Activated T-helper 2 cell treated with anti-CD3 and anti-CD28 coated beads, Interferon-gamma antibody, Interleukin-2, Interleukin-4, amounts not matched to agents 10 μg/mL and 5 μg/mL and 100 μg/mL, durations not matched to agents 14 hours and 24 hours and 36 hours (primary cell): ENCODE measurements at regions of chr17 and their contacts with region 1.

Region 1: DNA sequence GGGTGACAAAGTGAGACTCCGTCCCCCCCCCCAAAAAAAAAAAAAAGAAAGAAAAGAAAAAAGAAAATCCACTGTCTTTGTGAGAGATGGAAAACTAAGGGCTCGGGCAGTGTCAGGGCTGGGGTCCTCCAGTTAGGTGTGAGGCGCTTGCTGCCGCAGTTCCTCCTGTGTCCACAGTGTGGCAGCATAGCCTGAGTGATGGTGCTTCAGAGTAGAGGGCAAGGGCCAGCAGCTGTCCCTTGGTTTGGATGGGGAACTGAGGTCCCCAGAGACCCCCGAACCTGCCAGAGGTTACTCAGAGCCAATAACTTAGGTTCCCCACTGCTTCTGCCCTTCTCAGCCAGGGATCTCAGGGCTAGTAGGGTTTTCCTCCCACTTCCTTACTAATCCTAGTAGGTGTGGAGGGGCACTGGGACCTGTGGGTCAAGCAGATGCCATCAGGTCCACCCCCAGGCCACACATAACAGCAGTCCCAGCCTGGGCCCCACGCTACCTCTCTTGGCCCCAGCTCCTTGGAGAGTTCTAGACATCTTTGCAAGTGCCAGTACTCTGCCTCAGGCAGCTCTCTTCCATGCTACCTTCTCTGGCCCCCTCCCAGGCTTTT is 7.9 kb upstream of the LLGL1 start:
- DNase-seq: peak; percentile 65
- H3K4me3 Mint-ChIP-seq: no peak overlapping the region
- H3K27ac Mint-ChIP-seq: no peak overlapping the region
- H3K4me1 Mint-ChIP-seq: no peaks in the 10 kb centered on the region
- H3K27me3 Mint-ChIP-seq: no peaks in the 10 kb centered on the region

Region 2: GRCh38 chr17:17994271-17995069 is 223.0 kb before region 1 on chr17:
- intact Hi-C with region 1: no loop called
- DNase-seq: no peak
- H3K4me3 Mint-ChIP-seq: no peak overlapping the region
- H3K27ac Mint-ChIP-seq: no peak overlapping the region
- H3K4me1 Mint-ChIP-seq: no peaks in the 10 kb centered on the region
- H3K27me3 Mint-ChIP-seq: no peaks in the 10 kb centered on the region

Region 3: DNA sequence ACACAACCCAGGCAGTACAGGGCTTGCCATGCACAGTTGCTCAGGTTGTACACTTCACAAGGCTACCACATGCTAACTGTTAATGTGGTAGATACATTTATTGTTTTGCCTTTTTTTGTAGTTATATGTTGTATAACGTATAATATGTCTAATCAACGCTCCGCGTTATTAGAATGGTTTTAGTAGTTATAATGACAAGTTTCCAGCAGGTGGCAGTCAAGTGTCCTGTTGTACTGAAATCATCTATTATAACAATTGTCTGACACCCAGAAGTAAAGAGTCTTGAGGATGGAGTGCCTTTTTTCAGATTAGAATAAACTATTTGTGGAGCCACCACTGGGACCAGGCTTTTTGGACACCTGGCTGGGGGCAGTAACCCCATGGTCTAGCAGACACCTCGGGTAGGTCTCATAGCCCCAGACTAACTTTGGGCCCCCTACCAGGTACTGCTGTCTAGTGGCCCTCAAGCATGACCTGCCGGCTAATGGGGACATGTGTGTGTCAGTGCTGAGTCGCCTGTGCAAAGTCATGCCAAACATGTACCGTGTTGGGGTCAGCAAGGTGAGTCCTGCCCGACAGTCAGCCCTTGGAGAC is 76.2 kb before region 1 on chr17:
- intact Hi-C with region 1: loop called (anchors 2 kb)
- DNase-seq: no peak
- H3K4me3 Mint-ChIP-seq: no peak overlapping the region
- H3K27ac Mint-ChIP-seq: no peak overlapping the region
- H3K4me1 Mint-ChIP-seq: peaks cover 3% of the 10 kb centered on the region
- H3K27me3 Mint-ChIP-seq: no peaks in the 10 kb centered on the region